Dendritic cell treated with granulocyte-macrophage colony-stimulating factor and Interleukin-4, amounts not matched to agents 40 ng/mL and 50 ng/mL, for 4 days (primary cell): ENCODE measurements at regions of chr11 and their contacts with region 1.

Region 1: DNA sequence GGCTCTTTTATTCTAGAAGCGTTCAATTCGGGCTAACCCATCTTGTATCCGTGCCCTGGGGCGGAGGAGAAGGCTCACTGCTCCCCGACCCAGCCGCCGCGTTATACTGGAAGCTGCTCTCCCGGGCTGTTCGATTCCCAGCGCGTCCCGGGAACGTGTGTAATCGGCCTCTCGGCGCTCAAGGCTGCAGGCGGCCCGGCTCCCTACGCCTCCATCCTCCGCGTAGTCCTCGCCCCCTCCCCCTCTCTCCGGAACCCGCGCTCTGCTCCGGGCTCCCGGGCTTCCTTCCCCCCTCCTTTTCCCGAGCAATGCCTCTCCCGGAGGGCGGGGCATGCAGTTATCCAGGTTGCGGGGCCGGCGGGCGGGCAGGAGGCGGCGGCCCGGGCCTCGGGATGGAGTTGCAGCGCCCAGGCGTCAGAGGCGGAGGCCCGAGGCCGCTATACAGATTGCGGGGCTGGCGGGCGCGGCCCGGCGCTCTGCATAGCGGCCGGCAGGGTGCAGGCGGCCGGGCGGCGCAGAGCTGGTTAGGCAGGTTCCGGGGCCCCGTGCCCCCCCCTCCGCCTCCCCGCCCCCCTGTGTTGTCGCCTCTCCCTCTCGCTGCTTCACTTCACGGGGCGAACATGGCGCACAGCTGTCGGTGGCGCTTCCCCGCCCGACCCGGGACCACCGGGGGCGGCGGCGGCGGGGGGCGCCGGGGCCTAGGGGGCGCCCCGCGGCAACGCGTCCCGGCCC is at the start of gene KMT2A:
- H3K4me3 Mint-ChIP-seq: peak within 1 kb of the TSS; percentile 96
- H3K27ac Mint-ChIP-seq: peak within 1 kb of the TSS; percentile 74
- H3K4me1 Mint-ChIP-seq: peaks cover 54% of the 10 kb centered on the region
- H3K27me3 Mint-ChIP-seq: peaks cover 16% of the 10 kb centered on the region

Region 2: GRCh38 chr11:118401151-118401878 is 34.7 kb before region 1 on chr11 and contains the start of gene ATP5MG:
- intact Hi-C with region 1: loop called (anchors 1 kb)
- H3K4me3 Mint-ChIP-seq: peak within 1 kb of the TSS; percentile 89
- H3K27ac Mint-ChIP-seq: peak within 1 kb of the TSS; percentile 98
- H3K4me1 Mint-ChIP-seq: peaks cover 38% of the 10 kb centered on the region
- H3K27me3 Mint-ChIP-seq: no peaks in the 10 kb centered on the region